ENCODE measurements at regions of chr11 and their contacts with region 1.

Region 1: GRCh38 chr11:1050581-1051355 is 14.2 kb upstream of the MUC6 start:
- DNase-seq: peak; percentile 49 to 88
- H3K4me3 ChIP-seq: no peak overlapping the region
- H3K27ac ChIP-seq: no peak overlapping the region
- H3K4me1 ChIP-seq: no peaks in the 10 kb centered on the region
- H3K27me3 ChIP-seq: no peaks in the 10 kb centered on the region; a peak in 1 of 7 replicates
- CTCF ChIP-seq: peak; percentile 94 to 98 (median 97)
- EP300 ChIP-seq: no peak
- POLR2A ChIP-seq: no peak
- RAD21 ChIP-seq: peak; percentile 97 to 98

Region 2: GRCh38 chr11:890794-891540 is 159.8 kb before region 1 on chr11:
- CTCF ChIA-PET with region 1: interaction called, 19 read pairs
- POLR2A ChIA-PET with region 1: no interaction called
- DNase-seq: no peak
- H3K4me3 ChIP-seq: no peak overlapping the region
- H3K27ac ChIP-seq: no peak overlapping the region
- H3K4me1 ChIP-seq: peaks cover 0 to 5% (median 3%) of the 10 kb centered on the region in 4 experiments; a peak in 4 of 7 replicates
- H3K27me3 ChIP-seq: no peaks in the 10 kb centered on the region
- CTCF ChIP-seq: no peak
- EP300 ChIP-seq: no peak
- POLR2A ChIP-seq: no peak
- RAD21 ChIP-seq: no peak

Region 3: DNA sequence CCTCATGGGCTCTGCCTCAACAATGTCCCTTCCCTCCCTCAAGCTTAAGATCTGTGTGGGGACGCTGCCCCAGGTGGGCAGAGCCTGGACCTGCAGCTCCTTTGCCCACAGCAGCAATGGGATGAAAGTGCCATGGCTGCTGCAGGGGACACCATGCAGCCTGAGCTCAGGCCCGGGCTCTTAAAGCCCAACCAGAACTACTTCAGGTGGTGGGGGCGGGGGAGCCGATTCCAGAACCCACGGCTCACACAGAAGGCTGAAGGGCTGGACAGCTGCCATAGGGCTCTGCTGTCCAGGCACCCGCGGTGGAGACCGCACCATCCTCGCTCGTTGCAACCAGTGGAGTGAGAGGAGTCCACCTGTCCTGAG is 152.6 kb before region 1 on chr11:
- CTCF ChIA-PET with region 1: interaction called, 19 read pairs
- POLR2A ChIA-PET with region 1: interaction called, 5 read pairs
- DNase-seq: no peak
- H3K4me3 ChIP-seq: no peak overlapping the region
- H3K27ac ChIP-seq: no peak overlapping the region; the same call in 1 of the 2 replicates
- H3K4me1 ChIP-seq: no peaks in the 10 kb centered on the region; a peak in 2 of 7 replicates
- H3K27me3 ChIP-seq: no peaks in the 10 kb centered on the region
- CTCF ChIP-seq: peak in 2 of 3 experiments; percentile 46 to 75; a peak in 2 of 4 replicates
- EP300 ChIP-seq: no peak
- POLR2A ChIP-seq: no peak
- RAD21 ChIP-seq: peak; percentile 52 to 70; a peak in 3 of 4 replicates

Region 4: GRCh38 chr11:1006762-1007161 is 44.0 kb before region 1 on chr11:
- CTCF ChIA-PET with region 1: interaction called, 11 read pairs
- POLR2A ChIA-PET with region 1: no interaction called
- DNase-seq: no peak
- H3K4me3 ChIP-seq: no peak overlapping the region
- H3K27ac ChIP-seq: no peak overlapping the region
- H3K4me1 ChIP-seq: no peaks in the 10 kb centered on the region
- H3K27me3 ChIP-seq: no peaks in the 10 kb centered on the region
- CTCF ChIP-seq: no peak
- EP300 ChIP-seq: no peak
- POLR2A ChIP-seq: no peak
- RAD21 ChIP-seq: no peak

Region 5: GRCh38 chr11:1060824-1061616 is 10.3 kb after region 1 on chr11:
- CTCF ChIA-PET with region 1: interaction called, 14 read pairs
- POLR2A ChIA-PET with region 1: no interaction called
- DNase-seq: no peak
- H3K4me3 ChIP-seq: no peak overlapping the region
- H3K27ac ChIP-seq: no peak overlapping the region
- H3K4me1 ChIP-seq: no peaks in the 10 kb centered on the region
- H3K27me3 ChIP-seq: no peaks in the 10 kb centered on the region
- CTCF ChIP-seq: no peak
- EP300 ChIP-seq: no peak
- POLR2A ChIP-seq: no peak
- RAD21 ChIP-seq: no peak